Right ventricle myocardium superior (tissue), 1 donor: ENCODE measurements at regions of chr1 and their contacts with region 1.

Region 1: GRCh38 chr1:12464598-12465056 is 153.4 kb downstream of the DHRS3 start:
- DNase-seq: no peak
- ATAC-seq: peak; percentile 44

Region 2: DNA sequence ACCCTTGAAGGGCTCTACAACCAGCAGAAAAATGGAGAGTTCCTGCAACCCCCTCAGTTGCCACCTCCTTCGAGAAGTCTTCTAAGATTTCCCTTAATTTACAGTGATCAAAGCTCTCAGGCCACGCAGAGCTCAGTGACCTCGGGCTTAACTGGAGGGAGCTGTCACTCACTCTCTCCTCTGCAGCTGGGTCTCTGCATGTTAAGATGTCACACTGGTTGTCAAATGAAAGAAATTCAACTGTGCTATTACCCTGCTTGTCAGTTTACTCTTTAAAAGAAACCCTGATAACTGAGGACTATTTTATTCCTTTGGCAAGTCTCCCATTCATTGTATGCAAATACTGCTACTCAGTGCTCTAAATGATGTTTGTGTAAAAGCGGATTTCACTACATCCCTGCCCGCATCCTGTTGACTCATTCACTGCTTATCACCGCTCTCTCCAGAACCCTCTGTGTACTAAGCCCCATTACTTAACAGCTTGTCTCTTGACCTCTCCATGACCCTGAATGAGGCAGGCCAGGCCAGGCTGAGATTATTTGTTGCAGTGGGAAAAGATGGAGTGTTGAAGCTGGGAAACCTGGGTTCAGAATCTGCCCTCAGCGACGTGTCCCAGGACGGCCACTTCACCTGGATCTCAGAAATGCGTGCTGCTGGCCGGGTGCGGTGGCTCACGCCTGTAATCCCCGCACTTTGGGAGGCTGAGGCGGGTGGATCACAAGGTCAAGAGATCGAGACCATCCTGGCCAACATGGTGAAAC is 139.7 kb after region 1 on chr1:
- intact Hi-C with region 1: loop called (anchors 5 kb)
- DNase-seq: no peak
- ATAC-seq: peak; percentile 80

Region 3: GRCh38 chr1:12619792-12620487 is 155.3 kb after region 1 on chr1:
- intact Hi-C with region 1: no loop called
- DNase-seq: peak; percentile 91
- ATAC-seq: peak; percentile 57